Activated naive CD4-positive, alpha-beta T cell treated with anti-CD3 and anti-CD28 coated beads for 36 hours (primary cell): ENCODE measurements at regions of chrX and their contacts with region 1.

Region 1: DNA sequence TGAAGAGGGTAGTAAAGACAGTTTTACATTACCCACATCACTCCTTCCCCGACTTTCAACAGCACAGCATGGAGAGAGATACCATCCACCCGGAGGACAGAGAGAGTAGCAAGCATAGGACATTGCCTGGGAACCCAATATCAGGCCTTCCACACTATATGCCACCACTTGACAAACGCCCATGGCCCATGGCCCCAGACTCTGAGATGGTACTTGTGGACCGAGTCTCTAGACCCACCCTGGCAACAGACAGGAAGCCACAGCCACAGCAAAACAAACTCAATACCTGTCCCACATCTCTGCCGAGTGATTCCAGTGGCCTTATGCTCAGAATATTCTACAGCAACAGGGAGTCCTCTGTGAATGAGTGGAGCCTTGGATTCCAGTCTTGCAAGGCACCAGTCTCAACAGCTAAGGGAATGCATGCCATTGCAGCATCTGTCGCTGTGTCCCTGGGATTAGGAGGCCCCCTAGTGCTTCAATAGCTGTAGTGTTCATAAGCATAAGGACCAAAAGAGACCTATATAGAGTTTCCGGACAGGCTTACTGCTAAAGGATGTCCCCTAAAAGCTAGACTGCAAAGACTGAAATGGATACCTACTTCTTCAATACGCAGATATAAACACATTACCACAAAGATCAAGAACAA is 14.7 kb upstream of the CT55 start:
- DNase-seq: peak; percentile 51
- H3K4me3 Mint-ChIP-seq: no peak overlapping the region
- H3K27ac Mint-ChIP-seq: no peak overlapping the region
- H3K4me1 Mint-ChIP-seq: no peaks in the 10 kb centered on the region
- H3K27me3 Mint-ChIP-seq: peaks cover 3% of the 10 kb centered on the region

Region 2: GRCh38 chrX:134622056-134622812 is 563.7 kb before region 1 on chrX:
- CTCF ChIA-PET with region 1: no interaction called
- intact Hi-C with region 1: no loop called
- DNase-seq: peak; percentile 46
- H3K4me3 Mint-ChIP-seq: no peak overlapping the region
- H3K27ac Mint-ChIP-seq: no peak overlapping the region
- H3K4me1 Mint-ChIP-seq: peaks cover 19% of the 10 kb centered on the region
- H3K27me3 Mint-ChIP-seq: peaks cover 35% of the 10 kb centered on the region

Region 3: GRCh38 chrX:134969726-134970125 is 216.2 kb before region 1 on chrX:
- CTCF ChIA-PET with region 1: no interaction called
- intact Hi-C with region 1: loop called (anchors 1 kb)
- DNase-seq: no peak
- H3K4me3 Mint-ChIP-seq: no peak overlapping the region
- H3K27ac Mint-ChIP-seq: no peak overlapping the region
- H3K4me1 Mint-ChIP-seq: no peaks in the 10 kb centered on the region
- H3K27me3 Mint-ChIP-seq: peaks cover 2% of the 10 kb centered on the region

Region 4: DNA sequence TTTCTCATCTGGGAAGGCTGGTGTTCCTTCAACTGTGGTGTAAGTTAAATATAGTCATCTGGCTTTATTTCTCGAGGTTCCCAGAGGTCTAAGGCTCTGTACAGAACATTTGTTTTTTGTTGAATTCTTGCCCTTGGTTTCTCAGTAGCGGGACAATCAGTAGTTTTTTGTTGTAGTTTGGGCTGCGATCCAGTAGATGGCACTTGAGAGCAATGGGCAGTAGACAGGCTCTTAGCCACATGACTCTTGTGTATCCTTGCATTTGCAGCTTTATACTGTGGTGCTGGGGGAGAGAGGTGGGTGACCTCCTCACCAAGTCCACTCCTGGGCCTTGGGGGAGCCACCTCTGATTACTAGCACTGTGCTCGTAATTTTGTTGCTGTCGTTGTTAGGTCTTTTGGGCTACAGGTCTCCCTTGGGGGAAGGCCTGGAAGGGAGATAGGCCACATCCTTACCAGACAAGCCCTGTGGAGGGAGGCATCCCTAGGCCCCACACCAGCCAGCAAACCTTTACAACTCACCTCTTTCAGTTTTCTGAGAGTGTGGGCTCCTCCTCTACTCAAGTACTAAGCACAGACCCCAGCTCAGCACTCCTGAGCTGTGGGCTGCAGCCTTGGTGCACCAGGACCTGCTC is 73.7 kb before region 1 on chrX:
- CTCF ChIA-PET with region 1: interaction called, 11 read pairs
- intact Hi-C with region 1: no loop called
- DNase-seq: peak; percentile 51
- H3K4me3 Mint-ChIP-seq: no peak overlapping the region
- H3K27ac Mint-ChIP-seq: no peak overlapping the region
- H3K4me1 Mint-ChIP-seq: no peaks in the 10 kb centered on the region
- H3K27me3 Mint-ChIP-seq: peaks cover 15% of the 10 kb centered on the region

Region 5: GRCh38 chrX:135256923-135257322 is 71.0 kb after region 1 on chrX:
- CTCF ChIA-PET with region 1: no interaction called
- intact Hi-C with region 1: no loop called
- DNase-seq: no peak
- H3K4me3 Mint-ChIP-seq: no peak overlapping the region
- H3K27ac Mint-ChIP-seq: no peak overlapping the region
- H3K4me1 Mint-ChIP-seq: no peaks in the 10 kb centered on the region
- H3K27me3 Mint-ChIP-seq: no peaks in the 10 kb centered on the region